Left cardiac atrium (tissue), 4 donors: ENCODE measurements at regions of chr5 and their contacts with region 1.

Region 1: GRCh38 chr5:72816311-72817145 is at the start of gene TNPO1:
- DNase-seq: peak; percentile 95
- ATAC-seq: peak; percentile 94 to 96
- total RNA-seq, gene TNPO1: 64.2 to 71.5 TPM

Region 2: DNA sequence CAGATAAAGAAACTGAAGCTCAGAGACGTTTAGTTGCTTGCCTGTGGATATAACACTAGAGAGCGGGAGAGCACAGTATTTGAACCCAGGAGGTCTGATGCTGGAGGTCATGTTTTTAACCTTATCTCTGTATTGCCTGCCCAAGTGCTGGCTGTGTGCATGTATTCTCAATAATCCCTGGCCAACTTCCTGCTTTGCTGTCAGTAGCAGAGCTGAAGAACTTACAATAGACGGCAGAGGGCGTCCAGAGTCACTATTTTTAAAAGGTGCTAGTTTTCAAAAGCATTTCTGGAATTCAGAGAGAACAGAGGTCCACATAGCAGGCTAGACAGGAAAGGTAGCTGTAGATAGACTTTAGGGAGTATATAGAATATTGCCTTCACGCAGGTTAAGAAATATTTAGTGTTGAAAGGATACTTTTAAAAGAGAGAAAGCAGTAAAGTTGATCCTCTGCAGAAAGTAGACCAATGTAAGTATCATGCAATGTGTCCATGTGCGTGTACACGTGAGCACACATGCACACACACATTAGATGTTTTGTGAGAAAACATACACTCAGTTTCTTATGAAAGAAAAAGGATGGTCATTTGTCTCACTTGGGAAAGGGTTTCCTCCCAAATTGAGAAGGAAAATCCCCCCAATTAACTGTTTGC is 450.1 kb before region 1 on chr5:
- intact Hi-C with region 1: loop called in 1 of 2 experiments (anchors 5 kb)
- DNase-seq: peak; percentile 71
- ATAC-seq: peak; percentile 87 to 91

Region 3: GRCh38 chr5:72615061-72615460 is 201.5 kb before region 1 on chr5:
- intact Hi-C with region 1: loop called in 1 of 2 experiments (anchors 2 kb)
- DNase-seq: no peak
- ATAC-seq: no peak

Region 4: DNA sequence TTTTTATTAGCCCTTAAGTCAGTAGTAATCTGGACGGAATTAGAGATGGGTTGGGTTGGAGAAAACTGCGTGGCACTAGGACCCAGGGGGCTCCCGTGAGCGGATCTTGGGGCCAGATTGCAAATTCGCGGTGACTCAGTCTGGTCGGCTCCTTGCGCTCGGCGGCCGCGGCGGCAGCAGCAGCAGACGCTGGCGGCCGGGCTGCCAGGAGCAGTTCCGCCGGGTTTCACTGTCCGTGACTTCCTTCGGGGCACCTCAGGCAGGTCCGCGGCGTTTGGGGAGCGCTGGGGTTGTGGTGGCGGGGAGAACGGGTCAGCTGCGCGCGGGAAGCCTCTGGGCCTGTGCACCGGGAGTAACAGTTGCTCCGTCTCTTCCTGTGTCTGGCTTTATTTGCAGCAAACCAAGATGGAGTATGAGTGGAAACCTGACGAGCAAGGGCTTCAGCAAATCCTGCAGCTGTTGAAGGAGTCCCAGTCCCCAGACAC is 31.5 kb after region 1 on chr5:
- intact Hi-C with region 1: loop called in 1 of 2 experiments (anchors 2 kb)
- DNase-seq: peak; percentile 93
- ATAC-seq: peak; percentile 96